ENCODE measurements at regions of chr4 and their contacts with region 1.

Region 1: DNA sequence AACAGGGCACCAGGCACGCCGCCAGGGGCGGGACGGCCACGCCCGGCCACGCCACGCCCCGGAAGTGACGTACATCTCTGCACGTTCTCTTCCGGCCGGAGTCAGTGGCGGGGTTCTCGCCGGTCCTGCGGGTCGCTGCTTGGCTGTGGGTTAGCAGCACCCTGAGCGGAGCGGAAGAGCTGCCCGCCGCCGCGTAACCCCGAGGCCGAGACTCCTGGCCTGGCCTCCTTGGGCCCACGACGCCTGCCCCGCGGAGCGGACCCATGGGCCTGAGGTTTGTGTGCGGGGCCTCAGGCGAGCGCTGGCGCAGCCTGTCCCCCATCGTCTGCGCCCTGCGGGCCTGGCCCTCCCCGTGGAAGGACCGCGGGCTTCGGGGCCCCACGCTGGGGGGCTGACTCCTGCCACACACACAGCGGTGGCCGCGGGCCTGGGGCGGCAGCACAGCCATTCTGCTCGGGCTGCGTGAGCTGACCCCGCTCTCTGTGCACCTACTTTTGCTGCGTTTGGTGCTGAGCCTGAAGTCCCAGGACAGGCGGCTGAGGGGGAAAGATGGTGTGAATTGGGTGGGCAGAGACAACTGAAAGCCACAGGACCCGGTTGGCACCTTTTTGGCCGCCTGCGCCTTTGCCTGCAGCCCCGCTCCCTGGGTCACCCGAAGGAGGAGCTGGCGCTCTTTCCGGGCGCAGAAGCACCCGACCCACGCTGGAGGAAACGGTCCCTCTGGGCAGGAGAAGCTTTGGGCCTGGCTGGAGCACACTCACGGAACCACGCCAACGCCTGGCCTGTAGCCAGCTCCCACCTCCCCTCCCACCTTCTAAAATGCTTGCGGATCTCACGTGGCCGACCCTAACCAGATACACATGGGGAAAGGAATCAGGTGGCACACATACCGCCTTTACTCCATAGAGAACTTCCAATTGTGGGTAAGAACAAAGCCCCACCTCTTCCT is 28.1 kb downstream of the NOP14 start:
- DNase-seq: peak; percentile 95
- CTCF ChIP-seq: peak; percentile 31

Region 2: DNA sequence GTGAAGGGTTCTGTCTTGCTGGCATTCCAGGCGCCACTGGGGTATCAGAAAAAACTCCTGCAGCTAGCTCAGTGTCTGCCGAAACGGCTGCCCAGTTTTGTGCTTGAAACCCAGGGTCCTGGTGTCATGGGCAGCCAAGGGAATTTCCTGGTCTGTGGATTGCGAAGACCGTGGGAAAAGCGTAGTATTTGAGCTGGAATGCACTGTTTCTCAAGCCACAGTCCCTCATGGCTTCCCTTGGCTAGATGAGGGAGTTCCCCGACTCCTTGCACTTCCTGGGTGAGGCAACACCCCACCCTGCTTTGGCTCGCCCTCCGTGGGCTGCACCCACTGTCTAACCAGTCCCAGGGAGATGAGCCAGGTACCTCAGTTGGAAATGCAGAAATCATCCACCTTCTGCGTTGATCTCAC is 11.9 kb before region 1 on chr4:
- CTCF ChIA-PET with region 1: interaction called, 3 read pairs
- POLR2A ChIA-PET with region 1: interaction called, 10 read pairs
- DNase-seq: no peak
- CTCF ChIP-seq: no peak

Region 3: DNA sequence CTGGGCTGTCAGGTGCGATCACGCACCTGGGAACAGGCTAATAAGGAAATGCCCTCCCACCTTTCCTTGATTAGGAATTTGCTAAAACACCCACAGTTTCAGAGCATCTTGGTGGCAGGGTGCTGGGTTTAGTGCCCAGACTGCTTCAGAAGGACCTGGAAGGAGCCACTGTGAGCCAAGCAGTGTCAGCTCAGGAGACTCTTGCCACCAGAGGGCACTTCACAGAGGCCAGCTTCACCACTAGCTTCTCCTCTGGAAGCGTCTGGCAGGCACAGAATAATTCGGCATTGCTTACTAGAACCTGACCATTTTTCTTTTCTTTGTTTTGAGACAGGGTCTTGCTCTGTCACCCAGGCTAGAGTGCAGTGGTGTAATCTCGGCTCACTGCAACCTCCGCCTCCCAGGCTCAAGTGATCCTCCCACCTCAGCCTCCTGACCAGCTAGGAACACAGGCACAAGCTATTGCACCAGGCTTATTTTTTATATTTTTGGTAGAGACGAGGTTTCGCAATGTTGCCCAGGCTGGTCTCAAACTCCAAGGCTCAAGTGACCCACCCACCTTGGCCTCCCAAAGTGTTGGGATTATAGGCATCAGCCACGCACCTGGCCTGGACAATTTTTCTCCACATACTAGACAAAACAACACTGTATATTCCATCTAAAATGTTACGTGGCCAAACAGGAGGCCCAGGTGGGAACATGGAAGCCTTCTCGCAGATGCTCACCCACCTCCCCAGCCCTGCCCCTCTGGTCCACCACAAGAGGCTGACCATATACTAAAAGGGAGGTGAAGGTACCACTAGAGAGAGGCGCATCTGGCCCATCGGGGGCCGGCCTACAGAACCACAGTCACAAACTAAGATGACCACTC is 14.0 kb after region 1 on chr4:
- CTCF ChIA-PET with region 1: interaction called, 27 read pairs
- POLR2A ChIA-PET with region 1: interaction called, 19 read pairs
- DNase-seq: no peak
- CTCF ChIP-seq: peak; percentile 42

Region 4: GRCh38 chr4:2954358-2955185 is 19.5 kb after region 1 on chr4:
- CTCF ChIA-PET with region 1: interaction called, 27 read pairs
- POLR2A ChIA-PET with region 1: interaction called, 19 read pairs
- DNase-seq: peak; percentile 62
- CTCF ChIP-seq: peak; percentile 32

Region 5: DNA sequence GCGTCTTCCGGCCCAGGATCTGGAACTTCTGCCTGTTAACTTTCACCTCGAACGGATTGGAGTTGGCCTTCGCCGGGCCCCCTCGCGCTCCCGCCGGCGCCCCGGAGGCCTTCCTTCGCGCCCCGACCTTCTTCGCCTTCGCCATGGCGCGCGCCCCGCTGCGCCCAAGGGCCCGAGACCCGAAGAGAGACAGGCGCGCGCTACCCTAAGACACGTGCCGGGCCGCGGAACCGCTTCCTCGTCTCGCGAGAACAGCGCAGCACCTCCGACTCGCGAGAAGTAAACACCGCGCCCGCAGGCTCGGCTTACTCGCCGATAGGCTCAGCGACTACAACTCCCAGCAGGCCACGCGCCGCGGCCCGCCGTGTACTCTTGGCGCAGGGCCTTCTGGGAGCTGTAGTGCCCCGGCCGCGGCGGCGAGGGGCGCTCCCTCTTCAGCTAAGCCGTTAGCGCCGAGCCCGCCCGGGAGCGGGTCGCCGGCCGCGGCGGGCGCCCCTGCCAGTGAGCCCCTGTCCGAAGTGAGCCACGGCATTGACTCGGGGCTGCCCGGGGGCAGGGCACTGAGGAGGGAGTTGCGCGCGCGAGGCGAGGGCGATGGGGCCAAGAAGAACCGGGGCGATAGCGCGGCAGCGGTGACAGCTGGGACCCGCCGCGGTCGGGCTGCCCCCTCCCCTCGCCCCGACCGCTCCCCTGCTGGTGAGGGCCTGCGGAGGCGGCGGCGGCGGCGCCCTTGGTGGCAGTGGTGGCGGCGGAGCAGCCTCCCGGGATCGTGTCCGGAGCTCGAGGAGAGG is 28.3 kb after region 1 on chr4 and contains the starts of genes GRK4 and NOP14:
- CTCF ChIA-PET with region 1: interaction called, 6 read pairs
- POLR2A ChIA-PET with region 1: interaction called, 10 read pairs
- DNase-seq: peak; percentile 98
- CTCF ChIP-seq: peak; percentile 12

Region 6: GRCh38 chr4:3598695-3599227 is 663.7 kb after region 1 on chr4:
- CTCF ChIA-PET with region 1: no interaction called
- POLR2A ChIA-PET with region 1: no interaction called
- DNase-seq: no peak
- CTCF ChIP-seq: no peak

Measured in GM10248 (cell line).